Activated CD4-positive, alpha-beta memory T cell treated with anti-CD3 and anti-CD28 coated beads for 36 hours (primary cell): ENCODE measurements at regions of chr11 and their contacts with region 1.

Region 1: DNA sequence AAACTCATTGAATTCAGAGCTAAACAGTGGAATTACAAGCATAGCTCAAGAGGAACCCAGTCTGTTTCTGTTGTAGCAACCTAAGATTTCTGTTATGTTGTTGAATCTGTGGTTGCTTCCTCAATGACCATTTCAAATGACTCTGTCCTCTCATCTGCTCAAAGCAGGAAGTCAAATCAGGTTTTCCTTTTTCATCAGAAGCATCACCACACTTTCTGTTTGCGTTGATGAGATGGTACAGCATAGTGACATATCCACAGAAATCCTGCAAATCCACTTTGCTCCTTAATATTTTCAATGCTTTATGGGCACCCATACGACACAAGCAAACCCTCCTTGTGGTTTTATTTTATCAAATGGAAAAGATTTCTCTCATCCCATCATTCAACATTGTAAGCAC is 12.6 kb upstream of the UCP2 start:
- DNase-seq: no peak
- H3K4me3 Mint-ChIP-seq: peak overlapping the region; percentile 49
- H3K27ac Mint-ChIP-seq: peak overlapping the region; percentile 91
- H3K4me1 Mint-ChIP-seq: peaks cover 75% of the 10 kb centered on the region
- H3K27me3 Mint-ChIP-seq: no peaks in the 10 kb centered on the region

Region 2: GRCh38 chr11:74011360-74012073 is 16.3 kb after region 1 on chr11:
- CTCF ChIA-PET with region 1: interaction called, 7 read pairs
- POLR2A ChIA-PET with region 1: interaction called, 36 read pairs
- intact Hi-C with region 1: loop called (anchors 1 kb)
- DNase-seq: peak; percentile 84
- H3K4me3 Mint-ChIP-seq: peak overlapping the region; percentile 24
- H3K27ac Mint-ChIP-seq: peak overlapping the region; percentile 95
- H3K4me1 Mint-ChIP-seq: peaks cover 86% of the 10 kb centered on the region
- H3K27me3 Mint-ChIP-seq: no peaks in the 10 kb centered on the region

Region 3: GRCh38 chr11:74018331-74019005 is 23.2 kb after region 1 on chr11:
- CTCF ChIA-PET with region 1: interaction called, 7 read pairs
- POLR2A ChIA-PET with region 1: interaction called, 21 read pairs
- intact Hi-C with region 1: loop called (anchors 1 kb)
- DNase-seq: no peak
- H3K4me3 Mint-ChIP-seq: no peak overlapping the region
- H3K27ac Mint-ChIP-seq: no peak overlapping the region
- H3K4me1 Mint-ChIP-seq: peaks cover 44% of the 10 kb centered on the region
- H3K27me3 Mint-ChIP-seq: no peaks in the 10 kb centered on the region